Ascending aorta (tissue), 2 donors: ENCODE measurements at regions of chr15 and their contacts with region 1.

Region 1: DNA sequence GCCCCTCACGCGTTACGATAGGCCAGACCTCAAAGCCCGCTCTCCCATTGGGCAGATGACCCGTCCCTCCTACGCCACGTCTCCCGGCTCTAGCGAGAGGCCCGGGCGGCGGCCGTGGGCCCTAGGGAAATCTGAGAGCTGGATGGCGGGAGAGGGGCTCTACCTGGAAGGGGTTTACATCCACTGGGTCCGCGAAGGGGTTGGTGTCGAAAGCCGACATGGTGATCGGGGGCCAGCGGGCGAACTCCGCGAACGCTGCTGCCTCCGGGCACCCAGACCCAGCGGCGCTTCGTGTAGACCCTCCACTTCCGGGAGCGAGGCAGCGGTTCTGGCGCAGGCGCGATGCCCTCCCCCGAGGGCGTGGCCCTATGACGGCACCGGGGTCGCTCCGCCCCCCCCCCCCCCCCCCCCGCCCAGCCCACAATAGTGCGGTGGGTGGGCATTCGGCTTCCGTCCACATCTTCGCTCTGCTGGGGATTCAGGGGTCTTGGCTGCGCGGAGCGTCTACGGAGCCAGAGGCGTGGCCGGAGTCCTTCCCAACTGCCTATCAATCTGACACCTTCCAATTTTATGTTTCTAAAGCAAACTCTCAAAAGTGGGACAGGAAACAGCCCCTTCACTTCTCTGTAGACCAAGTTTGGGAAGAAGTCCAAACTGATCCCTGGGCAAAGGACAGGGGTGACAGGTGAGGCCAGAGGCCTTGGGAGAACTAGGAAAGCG is at the start of gene SCAMP2:
- DNase-seq: peak; percentile 84 to 97
- H3K4me3 ChIP-seq: peak within 1 kb of the TSS; percentile 48 to 80
- H3K27ac ChIP-seq: peak within 1 kb of the TSS; percentile 83 to 94
- H3K4me1 ChIP-seq: peaks cover 9 to 40% of the 10 kb centered on the region in 2 donors
- H3K27me3 ChIP-seq: no peaks in the 10 kb centered on the region
- CTCF ChIP-seq: no peak
- total RNA-seq, gene SCAMP2: 90.8 TPM

Region 2: DNA sequence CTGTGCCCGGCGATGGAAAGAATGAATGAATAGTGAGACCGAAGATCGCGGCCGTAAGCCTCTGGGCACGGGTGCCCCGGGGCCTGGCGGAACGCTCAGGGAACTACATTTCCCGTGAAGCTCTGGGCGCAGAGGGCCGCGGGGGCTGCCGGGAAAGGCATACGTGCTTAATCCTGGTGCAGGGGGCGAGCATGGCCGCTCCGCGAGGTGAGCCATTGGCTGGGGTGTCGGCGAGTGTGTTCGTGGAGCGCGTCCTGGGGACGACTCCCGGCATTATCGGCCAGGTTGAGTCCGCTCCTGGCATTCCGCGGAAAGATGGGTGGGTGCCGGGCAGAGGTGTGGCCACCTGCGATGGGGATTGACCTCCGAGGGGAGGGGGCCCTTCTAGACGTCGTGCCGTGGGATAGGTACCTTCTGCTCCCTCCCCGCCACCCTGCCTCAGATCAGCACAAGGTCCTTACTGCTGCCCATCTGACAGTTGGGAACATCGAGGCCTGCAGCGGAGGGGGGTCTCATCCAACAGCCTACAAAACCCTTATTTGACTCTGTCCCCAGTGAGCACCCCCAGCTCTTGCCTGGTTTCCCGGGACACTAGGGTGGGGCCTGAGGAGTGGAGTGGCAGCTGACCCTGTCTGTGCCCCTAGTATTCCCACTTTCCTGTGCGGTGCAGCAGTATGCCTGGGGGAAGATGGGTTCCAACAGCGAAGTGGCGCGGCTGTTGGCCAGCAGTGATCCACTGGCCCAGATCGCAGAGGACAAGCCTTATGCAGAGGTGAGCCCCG is 16.9 kb after region 1 on chr15 and contains the start of gene MPI:
- intact Hi-C with region 1: loop called (anchors 1 kb)
- DNase-seq: peak; percentile 47 to 89
- H3K4me3 ChIP-seq: peak within 1 kb of the TSS; percentile 76 to 85
- H3K27ac ChIP-seq: peak within 1 kb of the TSS; percentile 70 to 76
- H3K4me1 ChIP-seq: peaks cover 4 to 13% of the 10 kb centered on the region in 2 donors
- H3K27me3 ChIP-seq: no peaks in the 10 kb centered on the region
- CTCF ChIP-seq: no peak
- total RNA-seq, gene MPI: 118 TPM